ENCODE measurements at regions of chr12 and their contacts with region 1.

Region 1: DNA sequence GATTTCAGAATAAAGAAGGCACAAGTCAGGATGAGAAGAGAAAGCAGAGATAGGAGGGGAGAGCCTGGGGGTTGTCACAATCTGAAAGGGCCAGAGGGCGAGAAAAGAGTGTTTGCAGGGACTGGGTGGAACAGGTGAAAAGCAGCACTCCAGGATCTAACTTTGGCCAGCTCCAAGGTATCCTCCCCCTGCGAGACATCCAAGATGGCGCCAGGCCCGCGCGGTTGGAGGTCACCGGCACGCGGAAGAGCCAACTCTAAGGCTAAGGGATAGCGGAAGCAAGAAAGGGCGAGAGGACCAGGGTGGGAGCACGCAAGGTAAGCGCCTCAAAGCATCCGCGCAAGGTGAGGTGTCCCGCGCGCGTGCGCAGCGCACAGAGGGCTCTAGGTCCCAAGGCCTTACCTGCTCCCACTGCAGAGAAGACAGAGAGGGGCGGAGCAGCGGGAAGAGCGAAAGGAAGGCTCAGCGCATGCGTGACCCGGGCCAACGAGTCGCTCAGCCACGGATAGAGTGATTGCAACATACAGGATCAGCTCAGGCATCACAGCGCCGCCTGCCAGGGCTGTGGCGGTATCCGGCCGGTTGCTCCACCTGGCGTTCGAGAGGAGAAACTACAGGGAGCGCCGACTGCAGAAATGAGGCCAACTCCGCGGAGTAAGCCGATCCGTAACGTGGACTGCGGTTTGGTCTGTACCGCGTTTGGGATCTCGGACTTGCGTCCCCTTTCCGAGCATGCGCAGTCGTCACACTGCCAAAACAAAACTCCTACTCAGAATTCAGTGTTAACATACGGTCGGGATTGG is at the start of gene ATP5MC2:
- DNase-seq: peak; percentile 97 to 98 (median 98)
- ATAC-seq: peak; percentile 95 to 97
- H3K4me3 ChIP-seq: peak within 1 kb of the TSS; percentile 59
- H3K27ac ChIP-seq: peak within 1 kb of the TSS; percentile 96
- H3K4me1 ChIP-seq: no peaks in the 10 kb centered on the region
- H3K27me3 ChIP-seq: no peaks in the 10 kb centered on the region
- total RNA-seq, gene ATP5MC2: 397 to 507 (median 497) TPM

Region 2: DNA sequence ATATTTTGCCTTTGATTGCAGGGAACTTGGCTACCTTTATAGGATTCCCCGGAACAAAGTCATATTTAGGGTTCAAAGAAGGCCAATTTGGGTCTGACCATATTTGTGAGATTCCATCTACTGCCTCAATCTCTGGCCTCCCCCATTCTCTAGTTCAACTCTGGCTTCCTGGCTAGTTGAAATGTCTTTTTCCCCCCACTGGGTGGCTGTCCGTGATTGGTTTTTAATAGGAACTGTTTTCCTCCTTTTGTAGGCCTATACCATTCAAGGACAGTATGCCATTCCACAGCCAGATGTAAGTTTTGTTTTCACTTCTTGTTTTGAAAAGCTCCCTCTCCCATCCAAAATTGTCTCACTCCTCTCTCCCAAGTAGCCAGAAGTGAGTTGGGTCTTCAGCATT is 210.2 kb before region 1 on chr12:
- intact Hi-C with region 1: no loop called
- DNase-seq: no peak
- ATAC-seq: no peak
- H3K4me3 ChIP-seq: no peak overlapping the region
- H3K27ac ChIP-seq: peak overlapping the region; percentile 2
- H3K4me1 ChIP-seq: peaks cover 3% of the 10 kb centered on the region
- H3K27me3 ChIP-seq: no peaks in the 10 kb centered on the region

Region 3: GRCh38 chr12:53492830-53493611 is 182.8 kb before region 1 on chr12:
- intact Hi-C with region 1: no loop called
- DNase-seq: peak; percentile 96 to 98 (median 98)
- ATAC-seq: peak; percentile 95
- H3K4me3 ChIP-seq: peak overlapping the region; percentile 47
- H3K27ac ChIP-seq: peak overlapping the region; percentile 73
- H3K4me1 ChIP-seq: peaks cover 4% of the 10 kb centered on the region
- H3K27me3 ChIP-seq: no peaks in the 10 kb centered on the region

Region 4: DNA sequence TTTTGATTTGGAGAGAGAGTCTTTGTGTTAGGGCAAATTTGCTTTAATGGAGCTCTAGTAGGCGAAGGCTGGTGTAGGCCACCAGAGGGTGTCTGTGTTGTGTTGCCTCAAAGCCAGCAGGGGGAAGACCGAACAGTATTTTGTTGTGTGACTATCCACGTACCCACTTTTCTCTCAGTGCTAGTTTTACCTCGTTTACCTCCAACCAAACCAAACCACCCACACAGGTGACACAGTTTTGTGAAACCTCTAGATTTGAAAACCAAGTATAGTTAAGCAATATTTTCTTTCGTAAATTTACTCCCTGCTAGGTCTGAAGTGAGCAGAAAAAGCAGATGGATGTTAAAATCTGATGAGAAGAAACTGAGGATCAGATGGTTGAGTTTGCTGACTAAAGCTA is 132.3 kb before region 1 on chr12:
- intact Hi-C with region 1: loop called (anchors 5 to 10 kb)
- DNase-seq: peak; percentile 49 to 79 (median 74)
- ATAC-seq: peak; percentile 85 to 90
- H3K4me3 ChIP-seq: no peak overlapping the region
- H3K27ac ChIP-seq: peak overlapping the region; percentile 70
- H3K4me1 ChIP-seq: no peaks in the 10 kb centered on the region
- H3K27me3 ChIP-seq: no peaks in the 10 kb centered on the region

Region 5: DNA sequence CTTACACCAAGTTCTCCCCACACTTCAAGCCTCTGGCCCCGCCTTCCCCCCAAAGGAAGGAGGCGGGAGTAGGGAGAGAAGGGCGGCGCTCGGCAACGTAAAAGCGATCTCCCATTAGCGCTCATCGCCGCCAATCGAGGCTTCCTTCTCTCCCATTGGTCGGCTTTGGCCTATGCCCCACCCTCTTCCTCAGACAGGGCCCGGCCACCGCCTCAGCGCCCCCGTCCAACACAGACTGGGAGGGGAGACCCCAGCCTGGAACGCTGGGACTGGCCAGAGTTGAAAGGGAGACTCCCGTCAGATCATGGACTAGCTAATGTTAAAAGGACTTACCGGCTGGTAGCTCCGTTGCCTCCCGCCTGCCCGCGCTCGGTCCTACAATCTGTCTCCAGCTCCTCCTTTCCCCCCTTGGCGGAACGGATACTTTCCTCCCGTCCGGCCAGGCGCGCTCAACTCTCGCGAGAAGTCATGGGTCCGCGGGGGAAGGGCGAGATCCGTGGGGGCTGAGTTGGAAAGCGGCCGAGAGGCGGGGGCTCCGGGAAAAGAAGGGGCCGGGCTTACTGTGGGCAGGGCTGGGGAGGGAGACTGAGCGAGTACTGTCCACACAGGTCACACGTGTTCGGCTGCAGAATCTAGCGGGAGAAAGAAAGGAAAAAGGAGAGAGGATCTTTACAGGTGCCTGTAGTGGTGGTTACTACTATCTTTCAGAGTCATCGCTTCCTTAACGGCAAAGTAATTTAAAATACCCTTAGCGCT is 49.7 kb before region 1 on chr12 and contains the start of gene ATF7:
- intact Hi-C with region 1: loop called in 3 of 4 experiments (anchors 5 to 10 kb)
- DNase-seq: peak; percentile 97 to 99 (median 99)
- ATAC-seq: peak; percentile 99
- H3K4me3 ChIP-seq: peak within 1 kb of the TSS; percentile 63
- H3K27ac ChIP-seq: peak within 1 kb of the TSS; percentile 96
- H3K4me1 ChIP-seq: peaks cover 3% of the 10 kb centered on the region
- H3K27me3 ChIP-seq: no peaks in the 10 kb centered on the region
- total RNA-seq, gene ATF7: 30.7 to 36.9 (median 33.3) TPM